ENCODE measurements at regions of chr1 and their contacts with region 1.

Region 1: GRCh38 chr1:79859212-79859948 is 852.9 kb upstream of the ADGRL4 start:
- DNase-seq: peak; percentile 97
- H3K4me3 ChIP-seq: peak overlapping the region in 1 of 3 experiments; percentile 18
- H3K27ac ChIP-seq: peak overlapping the region; percentile 98
- H3K4me1 ChIP-seq: peaks cover 30% of the 10 kb centered on the region
- H3K27me3 ChIP-seq: no peaks in the 10 kb centered on the region
- CTCF ChIP-seq: no peak
- POLR2A ChIP-seq: peak; percentile 74

Region 2: GRCh38 chr1:78831731-78832360 is 1027.5 kb before region 1 on chr1:
- CTCF ChIA-PET with region 1: no interaction called
- POLR2A ChIA-PET with region 1: no interaction called
- dilution Hi-C with region 1: no loop called
- intact Hi-C with region 1: loop called (anchors 5 kb)
- DNase-seq: peak; percentile 78
- H3K4me3 ChIP-seq: no peak overlapping the region
- H3K27ac ChIP-seq: peak overlapping the region; percentile 94
- H3K4me1 ChIP-seq: peaks cover 33% of the 10 kb centered on the region
- H3K27me3 ChIP-seq: no peaks in the 10 kb centered on the region
- CTCF ChIP-seq: no peak
- POLR2A ChIP-seq: no peak

Region 3: GRCh38 chr1:79497193-79497773 is 362.1 kb before region 1 on chr1:
- CTCF ChIA-PET with region 1: no interaction called
- POLR2A ChIA-PET with region 1: no interaction called
- dilution Hi-C with region 1: no loop called
- intact Hi-C with region 1: loop called (anchors 10 kb)
- DNase-seq: peak; percentile 49
- H3K4me3 ChIP-seq: no peak overlapping the region
- H3K27ac ChIP-seq: no peak overlapping the region
- H3K4me1 ChIP-seq: no peaks in the 10 kb centered on the region
- H3K27me3 ChIP-seq: no peaks in the 10 kb centered on the region
- CTCF ChIP-seq: peak; percentile 77 to 81
- POLR2A ChIP-seq: no peak

Region 4: GRCh38 chr1:79575424-79575823 is 284.0 kb before region 1 on chr1:
- CTCF ChIA-PET with region 1: no interaction called
- POLR2A ChIA-PET with region 1: no interaction called
- dilution Hi-C with region 1: no loop called
- intact Hi-C with region 1: loop called (anchors 1 kb)
- DNase-seq: peak; percentile 96
- H3K4me3 ChIP-seq: no peak overlapping the region
- H3K27ac ChIP-seq: peak overlapping the region; percentile 89
- H3K4me1 ChIP-seq: peaks cover 23% of the 10 kb centered on the region
- H3K27me3 ChIP-seq: no peaks in the 10 kb centered on the region
- CTCF ChIP-seq: no peak
- POLR2A ChIP-seq: peak; percentile 32

Region 5: GRCh38 chr1:79716447-79716846 is 142.9 kb before region 1 on chr1:
- CTCF ChIA-PET with region 1: interaction called, 4 read pairs
- POLR2A ChIA-PET with region 1: no interaction called
- dilution Hi-C with region 1: no loop called
- intact Hi-C with region 1: loop called (anchors 1 kb)
- DNase-seq: peak; percentile 96
- H3K4me3 ChIP-seq: no peak overlapping the region
- H3K27ac ChIP-seq: no peak overlapping the region
- H3K4me1 ChIP-seq: peaks cover 3% of the 10 kb centered on the region
- H3K27me3 ChIP-seq: no peaks in the 10 kb centered on the region
- CTCF ChIP-seq: no peak
- POLR2A ChIP-seq: no peak

Region 6: GRCh38 chr1:79811173-79811572 is 48.2 kb before region 1 on chr1:
- CTCF ChIA-PET with region 1: no interaction called
- POLR2A ChIA-PET with region 1: no interaction called
- dilution Hi-C with region 1: no loop called
- intact Hi-C with region 1: loop called (anchors 1 kb)
- DNase-seq: peak; percentile 89
- H3K4me3 ChIP-seq: no peak overlapping the region
- H3K27ac ChIP-seq: peak overlapping the region; percentile 93
- H3K4me1 ChIP-seq: peaks cover 17% of the 10 kb centered on the region
- H3K27me3 ChIP-seq: no peaks in the 10 kb centered on the region
- CTCF ChIP-seq: no peak
- POLR2A ChIP-seq: no peak

Measured in endothelial cell of umbilical vein (primary cell).